ENCODE measurements at regions of chr2 and their contacts with region 1.

Region 1: GRCh38 chr2:148582679-148583511 is 61.7 kb upstream of the EPC2 start:
- DNase-seq: no peak
- ATAC-seq: no peak
- H3K4me3 ChIP-seq: no peak overlapping the region
- H3K4me3 Mint-ChIP-seq: no peak overlapping the region
- H3K27ac ChIP-seq: no peak overlapping the region
- H3K27ac Mint-ChIP-seq: no peak overlapping the region
- H3K4me1 ChIP-seq: no peaks in the 10 kb centered on the region
- H3K4me1 Mint-ChIP-seq: peaks cover 0 to 4% (median 4%) of the 10 kb centered on the region in 3 donors
- H3K27me3 ChIP-seq: peaks cover 0 to 3% of the 10 kb centered on the region in 2 experiments
- H3K27me3 Mint-ChIP-seq: peaks cover 12% of the 10 kb centered on the region in 2 donors

Region 2: GRCh38 chr2:148613231-148614013 is 30.5 kb after region 1 on chr2:
- CTCF ChIA-PET with region 1: no interaction called
- POLR2A ChIA-PET with region 1: interaction called in 1 of 2 experiments, 10 read pairs
- DNase-seq: no peak
- ATAC-seq: no peak
- H3K4me3 ChIP-seq: no peak overlapping the region
- H3K4me3 Mint-ChIP-seq: no peak overlapping the region
- H3K27ac ChIP-seq: no peak overlapping the region
- H3K27ac Mint-ChIP-seq: no peak overlapping the region
- H3K4me1 ChIP-seq: peaks cover 0 to 3% of the 10 kb centered on the region in 2 experiments
- H3K4me1 Mint-ChIP-seq: peaks cover 6 to 8% (median 7%) of the 10 kb centered on the region in 3 donors
- H3K27me3 ChIP-seq: no peaks in the 10 kb centered on the region
- H3K27me3 Mint-ChIP-seq: no peaks in the 10 kb centered on the region

Region 3: GRCh38 chr2:149020432-149020851 is 437.5 kb after region 1 on chr2:
- CTCF ChIA-PET with region 1: no interaction called
- POLR2A ChIA-PET with region 1: no interaction called
- DNase-seq: no peak
- ATAC-seq: no peak
- H3K4me3 ChIP-seq: no peak overlapping the region
- H3K4me3 Mint-ChIP-seq: no peak overlapping the region
- H3K27ac ChIP-seq: no peak overlapping the region
- H3K27ac Mint-ChIP-seq: no peak overlapping the region
- H3K4me1 ChIP-seq: peaks cover 0 to 3% of the 10 kb centered on the region in 2 experiments
- H3K4me1 Mint-ChIP-seq: peaks cover 0 to 11% (median 4%) of the 10 kb centered on the region in 3 donors
- H3K27me3 ChIP-seq: peaks cover 0 to 5% of the 10 kb centered on the region in 2 experiments
- H3K27me3 Mint-ChIP-seq: peaks cover 0 to 4% of the 10 kb centered on the region in 2 donors